Ascending aorta (tissue), 2 donors: ENCODE measurements at regions of chr2 and their contacts with region 1.

Region 1: DNA sequence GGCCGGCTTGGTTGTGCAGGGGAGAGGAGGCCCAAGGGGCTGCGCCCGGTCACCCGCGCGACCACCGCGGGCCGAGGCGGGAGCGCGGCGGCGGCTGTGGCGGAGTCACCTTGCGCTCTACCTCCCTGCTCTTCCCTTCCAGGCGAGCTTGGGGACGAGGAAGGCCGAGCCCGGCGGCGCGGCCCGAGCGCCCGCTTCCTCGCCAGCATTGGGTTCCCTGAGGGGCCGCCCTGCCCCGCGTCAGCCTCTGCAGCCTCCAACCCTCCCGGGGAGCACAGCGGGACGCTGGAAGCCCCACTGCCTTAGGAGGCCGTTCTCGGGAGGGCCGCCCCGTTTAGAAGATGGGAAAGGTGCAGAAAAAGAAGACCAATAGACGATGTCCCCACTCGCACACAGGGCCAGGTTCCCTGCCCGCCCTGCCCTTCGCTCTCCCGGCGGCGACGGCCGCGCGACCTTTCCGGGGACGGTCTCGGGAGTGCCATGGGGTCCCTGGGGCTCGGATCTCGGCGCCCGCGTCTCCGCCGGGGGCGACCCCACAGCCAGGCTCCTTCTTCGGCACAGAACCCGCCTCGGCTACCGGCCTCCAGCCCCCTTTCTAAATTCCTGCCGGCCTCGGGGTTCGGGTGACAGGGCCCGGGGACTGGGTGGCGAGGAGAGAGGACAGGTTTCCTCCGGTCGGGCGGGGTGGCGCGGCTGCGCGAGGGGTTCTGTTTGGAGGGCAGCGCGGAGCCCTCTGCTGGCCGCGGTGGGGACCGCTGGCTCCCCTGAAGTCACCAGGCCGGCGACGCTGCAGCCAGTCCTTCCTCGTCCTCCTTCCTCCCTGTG is 85.5 kb downstream of the HS6ST1 start:
- DNase-seq: peak; percentile 39 to 88
- H3K4me3 ChIP-seq: peak overlapping the region; percentile 61 to 68
- H3K27ac ChIP-seq: peak overlapping the region; percentile 43 to 51
- H3K4me1 ChIP-seq: peaks cover 0 to 6% of the 10 kb centered on the region in 2 donors
- H3K27me3 ChIP-seq: no peaks in the 10 kb centered on the region
- CTCF ChIP-seq: peak; percentile 81 to 93 (median 89)

Region 2: DNA sequence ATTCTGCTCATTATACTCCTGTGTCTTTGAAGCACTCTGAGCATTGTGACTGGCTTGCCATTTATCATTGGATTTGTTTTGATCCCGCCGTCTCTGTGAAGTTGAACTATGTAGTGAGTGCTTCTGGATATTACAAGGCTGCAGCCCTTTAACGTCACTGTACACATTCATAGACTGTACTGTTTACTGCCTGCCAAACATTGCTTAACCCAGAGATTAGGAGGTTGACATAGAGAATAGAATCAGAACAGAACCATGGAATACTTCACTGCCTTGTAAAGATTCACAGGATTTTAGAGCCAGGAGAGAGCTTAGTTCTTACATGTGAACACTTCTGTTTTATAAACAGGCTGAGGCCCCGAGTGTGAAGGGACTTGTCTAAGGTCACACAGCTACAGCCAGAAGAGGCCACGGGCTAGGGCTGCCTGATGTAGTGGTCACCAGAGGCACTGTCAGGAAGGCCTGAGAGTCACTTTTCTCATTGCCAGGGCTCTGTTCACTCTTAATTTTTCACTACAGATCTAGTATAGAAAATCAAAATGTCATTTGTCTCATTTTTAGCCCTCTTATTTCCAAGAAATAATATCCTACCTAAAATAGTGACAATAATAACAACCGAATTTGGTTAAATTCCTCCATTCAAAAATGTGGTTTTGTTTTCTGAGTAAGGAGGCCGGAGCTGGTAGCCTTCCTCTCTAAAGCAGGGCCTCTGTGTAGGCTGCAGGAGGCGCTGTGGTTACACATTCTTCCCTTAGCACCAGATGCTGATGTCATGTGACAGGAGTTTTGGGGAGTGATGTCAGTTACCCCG is 54.3 kb before region 1 on chr2:
- intact Hi-C with region 1: loop called (anchors 2 kb)
- DNase-seq: no peak
- H3K4me3 ChIP-seq: no peak overlapping the region
- H3K27ac ChIP-seq: no peak overlapping the region
- H3K4me1 ChIP-seq: no peaks in the 10 kb centered on the region
- H3K27me3 ChIP-seq: no peaks in the 10 kb centered on the region
- CTCF ChIP-seq: peak; percentile 33 to 59 (median 55)